ENCODE measurements at regions of chr20 and their contacts with region 1.

Region 1: GRCh38 chr20:4064144-4064909 is 49.0 kb upstream of the RNF24 start:
- H3K4me3 ChIP-seq: no peak overlapping the region
- H3K27ac ChIP-seq: 0 out of 2 replicates have a peak overlapping the region, but pooled peaks have one; percentile 5
- H3K4me1 ChIP-seq: peaks cover 4% of the 10 kb centered on the region
- CTCF ChIP-seq: no peak

Region 2: DNA sequence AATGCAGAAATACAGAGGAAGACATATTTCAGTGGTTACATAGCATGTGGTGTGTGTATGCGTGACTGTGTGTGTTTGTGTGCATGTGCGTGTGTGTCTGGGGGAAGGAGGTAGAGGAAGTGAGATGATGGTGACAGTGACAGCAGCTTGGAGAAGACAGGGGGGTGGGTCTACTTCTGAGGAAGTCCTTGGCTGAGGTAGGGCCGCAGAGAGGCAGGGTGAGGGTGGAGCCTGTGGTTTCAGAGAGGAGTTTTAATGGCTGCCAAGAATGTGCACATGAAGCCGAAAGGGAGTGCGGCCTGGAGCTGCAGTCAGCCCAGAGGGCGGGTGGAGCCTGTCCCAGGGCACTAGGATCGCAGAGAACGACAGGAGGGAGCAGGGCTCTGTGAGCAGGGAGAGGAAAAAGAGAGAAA is 26.3 kb before region 1 on chr20:
- CTCF ChIA-PET with region 1: no interaction called
- POLR2A ChIA-PET with region 1: no interaction called
- H3K4me3 ChIP-seq: no peak overlapping the region
- H3K27ac ChIP-seq: no peak overlapping the region
- H3K4me1 ChIP-seq: peaks cover 25% of the 10 kb centered on the region
- CTCF ChIP-seq: no peak

Region 3: DNA sequence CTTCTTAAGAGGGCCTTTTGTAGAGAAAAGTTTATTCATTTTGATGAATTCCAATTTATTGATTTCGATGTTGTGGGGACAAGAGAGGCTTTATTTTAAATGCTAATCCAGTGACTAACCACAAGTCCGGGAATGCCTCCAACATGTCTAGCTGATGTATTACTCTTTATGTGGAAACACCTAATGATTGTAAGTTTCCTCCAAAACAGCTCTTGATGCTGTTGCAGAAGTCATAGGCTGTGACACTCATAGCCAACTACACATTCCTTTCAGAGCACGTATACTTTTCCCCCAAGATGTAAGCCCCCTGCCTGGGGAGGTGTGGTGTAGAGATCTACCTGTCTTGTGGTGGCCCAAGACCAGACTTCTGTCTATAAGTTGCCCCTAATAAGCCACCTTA is 12.3 kb after region 1 on chr20:
- CTCF ChIA-PET with region 1: interaction called, 33 read pairs
- POLR2A ChIA-PET with region 1: interaction called, 4 read pairs
- H3K4me3 ChIP-seq: no peak overlapping the region
- H3K27ac ChIP-seq: no peak overlapping the region
- H3K4me1 ChIP-seq: no peaks in the 10 kb centered on the region
- CTCF ChIP-seq: no peak

Measured in HEK293 (cell line).